ENCODE measurements at regions of chr1 and their contacts with region 1.

Region 1: DNA sequence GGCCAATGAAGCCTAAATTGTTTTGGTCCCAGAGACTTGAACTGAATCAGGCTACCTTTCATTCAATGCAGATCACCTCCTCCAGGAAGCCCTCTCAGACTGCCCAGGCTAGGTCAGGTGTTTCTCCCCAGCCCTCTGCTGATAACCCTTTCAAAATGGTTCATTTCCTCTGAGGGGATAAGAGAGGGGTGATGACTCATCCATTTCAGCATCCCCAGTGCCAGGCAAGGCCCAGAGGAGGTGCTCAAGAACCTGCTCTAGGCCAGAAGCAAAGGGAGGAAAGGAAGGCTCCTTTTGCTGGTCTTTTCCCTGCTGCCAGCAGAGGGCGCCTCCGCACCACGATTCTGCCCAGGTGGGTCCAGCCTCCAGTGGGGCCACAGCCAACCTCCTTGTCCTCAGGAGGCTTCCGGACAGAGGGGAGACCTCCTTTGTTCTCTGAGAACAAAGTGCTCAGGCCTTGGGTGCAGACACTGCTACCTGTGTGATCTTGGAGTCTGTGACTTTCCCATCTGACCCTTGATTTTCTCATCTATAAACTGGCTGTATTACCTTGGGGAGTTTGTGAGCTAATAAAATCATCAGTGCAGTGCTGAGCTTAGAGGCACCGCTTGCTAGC is 45.3 kb upstream of the ARHGEF10L start:
- DNase-seq: peak; percentile 82
- CTCF ChIP-seq: peak; percentile 94

Region 2: GRCh38 chr1:17170571-17170970 is 323.7 kb before region 1 on chr1:
- CTCF ChIA-PET with region 1: no interaction called
- POLR2A ChIA-PET with region 1: no interaction called
- DNase-seq: no peak
- CTCF ChIP-seq: no peak

Region 3: DNA sequence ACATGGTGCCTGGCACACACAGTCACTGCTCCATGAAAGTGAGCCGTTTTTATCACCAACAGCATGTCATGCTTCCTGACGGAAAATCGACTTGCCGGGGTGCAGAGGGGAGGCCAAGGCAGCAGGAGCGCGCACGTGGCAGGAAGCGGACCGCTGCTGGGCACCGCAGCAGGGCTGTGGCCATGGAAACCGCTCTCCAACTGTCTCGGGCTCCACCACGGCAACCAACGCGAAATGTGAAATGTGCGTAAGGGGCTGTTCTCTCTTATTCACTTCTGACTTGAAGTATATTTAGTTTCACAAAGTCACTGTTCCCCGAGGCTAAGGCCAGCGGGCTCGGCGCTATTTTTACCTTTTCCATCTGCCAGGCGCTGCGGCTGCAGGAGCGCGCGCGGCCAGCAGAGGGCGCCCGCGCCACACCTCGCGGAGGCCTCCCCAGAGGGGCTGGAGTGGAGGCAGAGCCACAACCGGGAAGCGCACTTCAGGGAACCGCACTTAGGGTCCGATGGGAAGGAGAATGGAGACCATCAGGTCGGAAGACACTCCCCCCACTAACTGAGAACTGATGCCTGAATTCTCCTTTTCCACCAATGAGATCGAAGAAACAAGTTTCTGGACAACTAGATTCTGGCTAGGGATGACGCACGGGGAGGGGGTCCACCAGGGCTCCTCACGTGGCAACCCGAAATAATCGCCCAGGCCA is 74.4 kb before region 1 on chr1:
- CTCF ChIA-PET with region 1: no interaction called
- POLR2A ChIA-PET with region 1: no interaction called
- DNase-seq: peak; percentile 83
- CTCF ChIP-seq: peak; percentile 100

Region 4: GRCh38 chr1:17611975-17612374 is 117.8 kb after region 1 on chr1:
- CTCF ChIA-PET with region 1: interaction called, 88 read pairs
- POLR2A ChIA-PET with region 1: no interaction called
- DNase-seq: no peak
- CTCF ChIP-seq: no peak

Region 5: GRCh38 chr1:17696417-17697301 is 202.4 kb after region 1 on chr1:
- CTCF ChIA-PET with region 1: no interaction called
- POLR2A ChIA-PET with region 1: no interaction called
- DNase-seq: no peak
- CTCF ChIP-seq: no peak